ENCODE measurements at regions of chr4 and their contacts with region 1.

Region 1: DNA sequence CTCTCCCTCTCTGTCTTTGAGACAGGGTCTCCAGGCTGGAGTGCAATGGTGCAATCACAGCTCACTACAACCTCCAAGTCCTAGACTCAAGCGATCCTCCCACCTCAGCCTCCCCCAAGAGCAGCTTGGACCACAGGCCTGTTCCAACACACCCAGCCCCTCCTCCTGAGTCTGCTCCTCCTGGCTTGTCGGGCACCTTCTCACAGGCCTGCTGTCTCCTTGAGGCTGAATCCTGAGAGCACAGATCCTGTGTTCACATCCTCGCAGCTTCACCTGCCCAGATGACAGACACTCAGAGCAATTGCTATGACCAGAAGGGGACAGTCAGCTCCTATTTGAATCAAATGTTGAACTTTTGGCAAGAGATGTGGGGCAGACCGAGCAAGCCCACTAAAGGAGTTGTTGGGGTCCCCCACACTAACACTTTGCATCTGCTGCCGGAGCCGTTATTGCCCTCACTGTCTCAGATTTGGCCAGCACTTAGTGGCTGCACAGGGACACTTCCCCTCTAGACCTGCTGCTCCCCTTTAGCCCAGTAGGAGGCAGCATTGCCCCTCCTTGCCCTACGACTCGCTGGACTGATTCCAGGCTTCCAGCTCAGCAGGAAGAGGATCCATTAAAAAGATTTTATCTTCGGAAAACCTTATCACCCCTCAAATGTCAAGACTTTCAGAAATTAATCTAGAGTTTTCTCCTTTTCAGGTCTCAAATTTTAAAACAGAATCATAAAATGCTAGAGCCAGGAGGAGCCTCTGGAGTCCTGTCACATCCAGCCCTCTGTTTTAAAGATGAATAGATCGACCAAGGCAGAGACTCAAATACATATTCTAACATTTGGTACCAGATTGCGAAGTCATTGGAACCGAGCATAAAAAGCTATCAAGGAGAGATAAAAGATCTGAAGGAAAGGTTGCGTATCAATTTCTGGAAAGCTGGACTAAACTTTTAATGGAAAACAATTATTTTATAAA is 113.7 kb downstream of the USP46 start:
- DNase-seq: peak; percentile 7
- ATAC-seq: peak; percentile 91
- H3K4me3 ChIP-seq: no peak overlapping the region
- H3K27ac ChIP-seq: no peak overlapping the region
- H3K4me1 ChIP-seq: no peaks in the 10 kb centered on the region
- H3K27me3 ChIP-seq: no peaks in the 10 kb centered on the region
- CTCF ChIP-seq: peak; percentile 93 to 96 (median 95)
- EP300 ChIP-seq: no peak
- POLR2A ChIP-seq: no peak
- RAD21 ChIP-seq: peak; percentile 93

Region 2: GRCh38 chr4:52588097-52588782 is 42.9 kb after region 1 on chr4:
- CTCF ChIA-PET with region 1: interaction called, 15 read pairs
- POLR2A ChIA-PET with region 1: no interaction called
- RAD21 ChIA-PET with region 1: interaction called, 4 read pairs
- SMC1A ChIA-PET with region 1: interaction called, 4 read pairs
- in situ Hi-C with region 1: no loop called
- intact Hi-C with region 1: no loop called
- DNase-seq: no peak
- ATAC-seq: peak; percentile 92
- H3K4me3 ChIP-seq: no peak overlapping the region
- H3K27ac ChIP-seq: no peak overlapping the region
- H3K4me1 ChIP-seq: no peaks in the 10 kb centered on the region
- H3K27me3 ChIP-seq: no peaks in the 10 kb centered on the region
- CTCF ChIP-seq: peak; percentile 54 to 69 (median 56)
- EP300 ChIP-seq: no peak
- POLR2A ChIP-seq: no peak
- RAD21 ChIP-seq: peak; percentile 68

Region 3: DNA sequence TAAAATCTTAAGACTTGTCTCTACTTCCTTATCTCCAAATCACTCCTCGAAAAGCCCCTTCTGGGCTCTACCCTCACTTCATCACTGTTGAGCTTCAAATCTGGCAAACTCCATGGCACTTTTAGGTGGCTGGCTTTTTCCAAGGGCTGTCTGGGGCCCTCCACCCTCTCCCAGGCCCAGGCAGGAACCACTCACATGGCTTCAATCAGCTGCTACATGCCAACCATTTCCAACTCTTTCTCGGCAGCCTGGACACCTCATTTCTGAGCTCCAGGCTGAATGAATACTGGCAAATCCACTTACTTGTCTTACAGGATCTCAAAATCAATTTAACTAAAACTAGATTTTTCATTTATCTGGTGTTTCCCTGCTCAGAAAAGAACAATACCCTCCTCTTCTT is 91.7 kb after region 1 on chr4:
- CTCF ChIA-PET with region 1: no interaction called
- POLR2A ChIA-PET with region 1: no interaction called
- RAD21 ChIA-PET with region 1: no interaction called
- SMC1A ChIA-PET with region 1: no interaction called
- in situ Hi-C with region 1: no loop called
- intact Hi-C with region 1: no loop called
- DNase-seq: no peak
- ATAC-seq: no peak
- H3K4me3 ChIP-seq: no peak overlapping the region
- H3K27ac ChIP-seq: peak overlapping the region; percentile 20; the same call in 1 of the 2 replicates
- H3K4me1 ChIP-seq: peaks cover 22% of the 10 kb centered on the region
- H3K27me3 ChIP-seq: no peaks in the 10 kb centered on the region
- CTCF ChIP-seq: no peak
- EP300 ChIP-seq: no peak
- POLR2A ChIP-seq: no peak
- RAD21 ChIP-seq: no peak

Region 4: GRCh38 chr4:52665592-52665991 is 120.2 kb after region 1 on chr4:
- CTCF ChIA-PET with region 1: interaction called, 50 read pairs
- POLR2A ChIA-PET with region 1: no interaction called
- RAD21 ChIA-PET with region 1: interaction called, 25 read pairs
- SMC1A ChIA-PET with region 1: interaction called, 52 read pairs
- in situ Hi-C with region 1: loop called (anchors 5 kb)
- intact Hi-C with region 1: loop called (anchors 2 kb)
- DNase-seq: no peak
- ATAC-seq: peak; percentile 94
- H3K4me3 ChIP-seq: no peak overlapping the region
- H3K27ac ChIP-seq: no peak overlapping the region
- H3K4me1 ChIP-seq: 0 out of 2 replicates have a peak, but pooled peaks cover 2% of the 10 kb centered on the region
- H3K27me3 ChIP-seq: no peaks in the 10 kb centered on the region
- CTCF ChIP-seq: peak; percentile 50 to 76 (median 52); a peak in 5 of 6 replicates
- EP300 ChIP-seq: no peak
- POLR2A ChIP-seq: no peak
- RAD21 ChIP-seq: peak; percentile 87

Region 5: DNA sequence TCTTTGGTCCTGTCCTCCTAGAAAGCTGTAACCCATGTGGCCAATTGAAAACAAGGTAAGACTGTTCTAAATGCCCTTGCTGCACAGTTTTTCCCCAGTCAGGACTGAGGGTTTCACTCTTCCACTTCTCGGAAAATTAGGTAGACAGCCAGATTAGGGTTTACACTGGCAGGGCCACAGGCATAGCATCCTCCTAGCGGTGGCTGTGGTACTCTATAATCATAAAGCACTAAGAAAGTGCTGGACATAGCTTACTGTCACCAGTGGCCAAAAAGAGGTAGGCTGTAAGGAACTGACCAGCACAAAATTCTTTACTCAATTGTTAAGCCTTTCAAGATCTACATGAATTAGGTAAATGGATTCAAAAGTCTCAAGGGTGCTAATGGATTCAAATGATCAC is 125.4 kb after region 1 on chr4:
- CTCF ChIA-PET with region 1: interaction called, 50 read pairs
- POLR2A ChIA-PET with region 1: no interaction called
- RAD21 ChIA-PET with region 1: interaction called, 25 read pairs
- SMC1A ChIA-PET with region 1: interaction called, 52 read pairs
- in situ Hi-C with region 1: loop called (anchors 5 kb)
- intact Hi-C with region 1: loop called (anchors 2 kb)
- DNase-seq: no peak
- ATAC-seq: no peak
- H3K4me3 ChIP-seq: no peak overlapping the region
- H3K27ac ChIP-seq: no peak overlapping the region
- H3K4me1 ChIP-seq: no peaks in the 10 kb centered on the region
- H3K27me3 ChIP-seq: no peaks in the 10 kb centered on the region
- CTCF ChIP-seq: no peak
- EP300 ChIP-seq: no peak
- POLR2A ChIP-seq: no peak
- RAD21 ChIP-seq: no peak

Region 6: GRCh38 chr4:52869196-52869595 is 323.8 kb after region 1 on chr4:
- CTCF ChIA-PET with region 1: no interaction called
- POLR2A ChIA-PET with region 1: no interaction called
- RAD21 ChIA-PET with region 1: no interaction called
- SMC1A ChIA-PET with region 1: no interaction called
- in situ Hi-C with region 1: no loop called
- intact Hi-C with region 1: no loop called
- DNase-seq: no peak
- ATAC-seq: no peak
- H3K4me3 ChIP-seq: no peak overlapping the region
- H3K27ac ChIP-seq: no peak overlapping the region
- H3K4me1 ChIP-seq: no peaks in the 10 kb centered on the region
- H3K27me3 ChIP-seq: no peaks in the 10 kb centered on the region
- CTCF ChIP-seq: no peak
- EP300 ChIP-seq: no peak
- POLR2A ChIP-seq: no peak
- RAD21 ChIP-seq: no peak

Region 7: GRCh38 chr4:53089936-53090729 is 544.7 kb after region 1 on chr4:
- CTCF ChIA-PET with region 1: no interaction called
- POLR2A ChIA-PET with region 1: no interaction called
- RAD21 ChIA-PET with region 1: no interaction called
- SMC1A ChIA-PET with region 1: no interaction called
- in situ Hi-C with region 1: no loop called
- intact Hi-C with region 1: no loop called
- DNase-seq: no peak
- ATAC-seq: no peak
- H3K4me3 ChIP-seq: no peak overlapping the region
- H3K27ac ChIP-seq: no peak overlapping the region
- H3K4me1 ChIP-seq: no peaks in the 10 kb centered on the region
- H3K27me3 ChIP-seq: no peaks in the 10 kb centered on the region
- CTCF ChIP-seq: no peak
- EP300 ChIP-seq: no peak
- POLR2A ChIP-seq: no peak
- RAD21 ChIP-seq: no peak

Measured in GM12878 (cell line).